Colonic mucosa (tissue), 4 donors: ENCODE measurements at regions of chr1 and their contacts with region 1.

Region 1: DNA sequence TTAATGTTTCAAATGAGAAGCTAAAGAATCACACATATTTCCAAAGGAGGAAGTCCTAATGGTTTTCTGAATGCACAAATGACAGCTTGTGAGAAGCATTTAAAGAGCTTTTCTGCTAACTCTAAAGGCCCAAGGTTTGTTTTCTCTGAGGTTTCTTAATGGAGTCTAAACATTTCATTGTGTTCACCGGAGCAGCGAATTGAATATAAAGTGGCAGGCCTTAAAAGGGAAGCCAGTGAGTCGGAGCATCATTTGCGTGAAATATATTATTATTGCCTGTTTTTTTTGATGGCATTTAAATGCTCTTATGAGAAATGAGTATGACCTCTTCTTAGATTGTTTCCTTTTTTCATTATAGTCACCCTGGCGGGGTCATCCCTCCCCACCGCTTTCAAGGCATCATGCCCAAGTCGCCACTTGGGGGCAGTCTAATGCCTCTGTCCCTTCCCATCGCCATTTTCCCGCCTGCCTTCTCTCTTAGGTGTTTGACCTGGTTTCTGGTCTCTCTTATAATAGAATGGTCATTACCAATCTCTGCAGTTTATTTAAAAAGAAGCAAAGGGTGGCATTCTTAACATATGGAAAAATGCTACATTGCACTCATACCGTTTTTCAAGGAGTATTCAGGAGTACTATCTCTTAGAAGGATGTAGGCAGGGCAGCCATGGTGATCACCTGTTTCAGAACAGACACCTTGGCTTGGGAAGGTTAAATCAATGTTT is 25.3 kb upstream of the OVAAL start:
- DNase-seq: peak; percentile 70
- H3K4me3 ChIP-seq: no peak overlapping the region
- H3K27ac ChIP-seq: no peak overlapping the region
- H3K4me1 ChIP-seq: no peaks in the 10 kb centered on the region
- H3K27me3 ChIP-seq: no peaks in the 10 kb centered on the region
- CTCF ChIP-seq: peak; percentile 80

Region 2: GRCh38 chr1:180424848-180425457 is 108.5 kb before region 1 on chr1:
- intact Hi-C with region 1: no loop called
- DNase-seq: no peak
- H3K4me3 ChIP-seq: no peak overlapping the region
- H3K27ac ChIP-seq: no peak overlapping the region
- H3K4me1 ChIP-seq: no peaks in the 10 kb centered on the region
- H3K27me3 ChIP-seq: no peaks in the 10 kb centered on the region
- CTCF ChIP-seq: no peak

Region 3: DNA sequence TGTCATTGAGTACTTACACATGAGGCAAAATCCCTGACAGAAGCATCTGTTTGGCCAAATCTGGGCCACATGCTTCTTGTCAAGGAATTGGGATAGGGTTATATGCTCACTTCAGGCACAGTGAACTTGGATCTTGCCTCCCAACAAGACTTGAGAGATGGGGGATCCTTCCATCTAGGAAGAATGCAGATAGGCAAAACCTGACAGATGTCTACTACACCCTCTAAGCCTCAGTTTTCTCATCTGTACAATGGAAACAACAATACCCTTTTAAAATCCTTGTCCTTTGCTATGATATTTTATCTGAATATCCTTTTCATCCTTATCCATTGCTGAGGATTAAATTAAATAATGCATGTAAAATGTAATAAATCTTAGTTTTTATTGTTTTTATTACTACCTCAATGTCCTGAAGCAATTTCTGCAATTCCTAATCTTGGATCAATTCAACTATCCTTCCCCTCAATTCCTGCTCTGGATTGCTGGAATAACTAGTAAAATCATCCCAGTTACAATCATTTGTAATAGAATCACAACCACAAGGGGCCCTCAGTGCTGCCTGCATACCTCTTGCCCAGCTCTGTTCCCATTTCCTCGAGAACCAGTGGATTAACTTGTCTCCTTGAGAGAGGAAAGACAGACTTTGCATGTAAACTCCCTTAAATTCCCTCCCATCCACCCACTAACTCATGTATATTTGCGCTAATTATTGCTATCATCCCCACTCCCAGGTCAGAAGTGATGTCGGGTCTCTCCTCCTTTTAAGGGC is 90.3 kb after region 1 on chr1:
- intact Hi-C with region 1: loop called (anchors 10 kb)
- DNase-seq: no peak
- H3K4me3 ChIP-seq: no peak overlapping the region
- H3K27ac ChIP-seq: no peak overlapping the region
- H3K4me1 ChIP-seq: no peaks in the 10 kb centered on the region
- H3K27me3 ChIP-seq: no peaks in the 10 kb centered on the region
- CTCF ChIP-seq: no peak

Region 4: DNA sequence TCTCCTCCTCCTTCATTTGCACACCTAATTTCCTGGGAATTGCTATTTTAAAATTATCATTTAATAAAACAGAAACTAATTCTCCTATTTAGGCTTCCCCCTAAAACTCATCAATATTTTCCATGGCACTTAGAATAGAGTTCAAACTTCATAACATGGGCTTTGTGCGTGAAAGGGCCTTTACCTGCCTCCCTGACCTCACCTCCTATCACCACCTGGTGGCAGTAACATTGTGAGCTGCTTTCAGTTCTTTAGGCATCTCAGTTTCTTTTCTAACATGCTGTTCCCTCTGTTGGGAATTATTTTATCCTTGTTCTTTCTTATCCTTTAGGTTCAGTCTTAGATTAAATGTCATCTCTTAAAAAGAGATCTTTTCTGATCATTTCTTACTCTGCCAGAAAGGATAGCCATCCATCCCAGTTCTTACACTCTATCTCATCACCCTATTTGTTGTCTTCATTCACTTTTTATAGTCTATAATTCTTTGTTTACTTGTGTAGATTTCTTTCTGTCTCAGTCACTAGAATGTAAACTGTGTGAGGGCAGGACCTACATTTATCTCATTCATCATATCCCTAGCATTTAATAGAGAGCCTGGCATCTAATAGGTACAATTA is 245.5 kb after region 1 on chr1:
- intact Hi-C with region 1: loop called (anchors 10 kb)
- DNase-seq: peak; percentile 18
- H3K4me3 ChIP-seq: no peak overlapping the region
- H3K27ac ChIP-seq: no peak overlapping the region
- H3K4me1 ChIP-seq: no peaks in the 10 kb centered on the region
- H3K27me3 ChIP-seq: no peaks in the 10 kb centered on the region
- CTCF ChIP-seq: peak; percentile 44